ENCODE measurements at regions of chr3 and their contacts with region 1.

Region 1: DNA sequence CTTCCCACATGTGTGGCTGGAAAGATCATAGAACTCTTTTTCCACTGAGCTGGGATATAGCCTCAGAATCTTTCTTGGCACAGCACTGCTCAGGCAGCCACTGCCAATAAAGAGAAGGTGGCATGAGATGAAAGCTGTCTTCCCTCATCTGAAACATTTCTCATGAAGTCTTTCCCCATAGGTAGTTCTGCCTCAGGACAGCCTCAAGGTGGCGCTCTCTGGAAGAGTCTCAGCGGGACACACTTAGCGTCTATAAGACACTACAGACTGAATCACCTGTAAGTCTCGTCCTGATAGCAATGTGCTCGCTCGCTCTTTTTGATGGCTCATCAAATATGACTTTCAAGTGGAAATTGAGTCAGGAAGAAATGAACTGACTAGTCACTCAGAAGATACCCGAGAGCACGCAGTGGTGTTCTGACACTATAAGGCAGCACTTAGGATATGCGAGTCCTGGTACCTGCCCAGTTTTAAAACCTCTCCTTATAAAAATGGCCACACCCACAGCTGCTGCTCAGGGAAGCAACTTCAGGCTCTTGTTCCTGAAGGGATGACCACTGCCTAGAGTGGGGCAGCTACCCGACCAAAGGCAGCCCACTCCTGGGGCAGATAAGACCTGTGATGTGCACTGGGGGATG is 269.5 kb downstream of the SUCLG2 start:
- DNase-seq: peak; percentile 36
- ATAC-seq: peak; percentile 55
- H3K4me3 Mint-ChIP-seq: no peak overlapping the region
- H3K27ac Mint-ChIP-seq: no peak overlapping the region
- H3K4me1 Mint-ChIP-seq: peaks cover 27% of the 10 kb centered on the region
- H3K27me3 Mint-ChIP-seq: no peaks in the 10 kb centered on the region
- CTCF ChIP-seq: peak; percentile 37

Region 2: GRCh38 chr3:67215690-67216089 is 169.2 kb before region 1 on chr3:
- CTCF ChIA-PET with region 1: no interaction called
- POLR2A ChIA-PET with region 1: no interaction called
- intact Hi-C with region 1: no loop called
- DNase-seq: no peak
- ATAC-seq: no peak
- H3K4me3 Mint-ChIP-seq: no peak overlapping the region
- H3K27ac Mint-ChIP-seq: no peak overlapping the region
- H3K4me1 Mint-ChIP-seq: no peaks in the 10 kb centered on the region
- H3K27me3 Mint-ChIP-seq: no peaks in the 10 kb centered on the region
- CTCF ChIP-seq: no peak

Region 3: GRCh38 chr3:67654099-67654843 is 269.4 kb after region 1 on chr3 and contains the start of gene SUCLG2:
- CTCF ChIA-PET with region 1: no interaction called
- POLR2A ChIA-PET with region 1: no interaction called
- intact Hi-C with region 1: loop called (anchors 10 kb)
- DNase-seq: peak; percentile 89
- ATAC-seq: peak; percentile 74
- H3K4me3 Mint-ChIP-seq: peak within 1 kb of the TSS; percentile 81
- H3K27ac Mint-ChIP-seq: peak within 1 kb of the TSS; percentile 94
- H3K4me1 Mint-ChIP-seq: peaks cover 61% of the 10 kb centered on the region
- H3K27me3 Mint-ChIP-seq: no peaks in the 10 kb centered on the region
- CTCF ChIP-seq: no peak
- total RNA-seq, gene SUCLG2: 61.3 to 65.5 TPM

Region 4: DNA sequence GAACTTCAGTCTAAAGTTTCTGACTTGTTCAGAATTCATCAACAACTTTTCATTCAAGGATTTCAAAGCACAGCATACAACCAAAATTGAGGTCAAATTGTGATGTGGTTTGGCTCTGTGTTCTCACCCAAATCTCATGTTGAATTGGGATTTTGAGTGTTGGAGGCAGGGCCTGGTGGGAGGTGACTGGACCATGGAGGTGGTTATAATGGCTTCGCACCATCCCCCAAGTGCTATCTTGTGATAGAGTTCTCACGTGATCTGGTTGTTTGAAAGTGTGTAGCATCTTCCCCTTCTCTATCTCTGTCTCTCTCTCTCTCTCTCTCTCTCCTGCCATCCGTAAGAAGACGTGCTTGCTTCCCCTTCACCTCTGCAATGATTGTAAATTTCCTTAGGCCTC is 289.2 kb after region 1 on chr3:
- CTCF ChIA-PET with region 1: no interaction called
- POLR2A ChIA-PET with region 1: no interaction called
- intact Hi-C with region 1: no loop called
- DNase-seq: no peak
- ATAC-seq: no peak
- H3K4me3 Mint-ChIP-seq: no peak overlapping the region
- H3K27ac Mint-ChIP-seq: no peak overlapping the region
- H3K4me1 Mint-ChIP-seq: peaks cover 20% of the 10 kb centered on the region
- H3K27me3 Mint-ChIP-seq: no peaks in the 10 kb centered on the region
- CTCF ChIP-seq: no peak

Measured in activated CD8-positive, alpha-beta T cell treated with anti-CD3 and anti-CD28 coated beads for 36 hours (primary cell).